A673 (cell line): ENCODE measurements at regions of chr4 and their contacts with region 1.

Region 1: DNA sequence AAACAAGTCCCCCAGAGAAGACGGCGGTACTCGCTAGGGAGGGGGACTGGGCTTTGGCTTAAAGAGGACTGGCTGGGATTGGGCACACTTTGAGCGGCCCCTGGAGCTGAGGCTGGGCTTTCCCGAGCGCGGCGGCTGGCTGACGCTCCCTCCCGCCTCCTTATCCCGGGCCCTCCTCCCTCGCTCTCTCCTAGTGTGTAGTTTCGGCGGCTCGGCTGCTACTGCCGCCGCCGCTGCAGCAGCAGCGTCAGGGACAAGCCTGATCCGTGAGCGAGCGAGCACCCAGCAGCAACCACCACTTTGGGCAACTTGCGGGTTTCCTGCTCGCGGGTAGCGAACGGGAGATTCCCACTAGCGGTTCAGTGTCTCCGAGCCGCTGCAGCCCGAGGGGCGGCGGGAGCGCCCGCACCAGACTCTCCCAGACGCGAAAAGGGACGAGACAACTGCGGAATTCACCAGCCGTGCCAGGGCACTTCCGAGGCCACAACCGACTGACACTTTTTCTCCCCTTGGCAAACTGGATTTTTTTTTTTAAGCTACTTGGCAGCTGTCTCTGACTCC is 629 bp upstream of the PCDH7 start:
- DNase-seq: peak; percentile 90
- H3K4me3 ChIP-seq: peak overlapping the region; percentile 93
- H3K27ac ChIP-seq: peak overlapping the region; percentile 96
- H3K4me1 ChIP-seq: peaks cover 18% of the 10 kb centered on the region
- H3K27me3 ChIP-seq: no peaks in the 10 kb centered on the region
- CTCF ChIP-seq: no peak

Region 2: DNA sequence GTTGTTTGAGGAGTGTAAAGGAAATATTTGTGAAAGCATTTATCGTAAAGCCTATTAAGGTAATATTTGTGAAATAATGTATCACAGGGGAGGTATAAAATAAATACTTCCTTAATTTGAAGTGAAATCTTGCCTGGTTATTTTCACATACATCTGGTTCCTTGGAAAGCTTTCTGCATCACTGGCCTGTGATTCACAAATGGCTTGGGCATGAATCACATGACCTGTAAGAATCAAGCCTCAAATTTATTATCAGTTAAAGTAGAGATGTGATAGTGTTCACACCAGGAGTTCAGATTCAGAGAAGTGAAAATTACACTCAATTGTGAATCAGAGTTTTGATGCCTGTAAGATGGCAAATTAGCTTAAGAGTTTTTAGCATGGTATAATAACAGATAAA is 1947.5 kb before region 1 on chr4:
- CTCF ChIA-PET with region 1: no interaction called
- POLR2A ChIA-PET with region 1: no interaction called
- intact Hi-C with region 1: no loop called
- DNase-seq: peak; percentile 54
- H3K4me3 ChIP-seq: no peak overlapping the region
- H3K27ac ChIP-seq: no peak overlapping the region
- H3K4me1 ChIP-seq: no peaks in the 10 kb centered on the region
- H3K27me3 ChIP-seq: no peaks in the 10 kb centered on the region
- CTCF ChIP-seq: no peak

Region 3: DNA sequence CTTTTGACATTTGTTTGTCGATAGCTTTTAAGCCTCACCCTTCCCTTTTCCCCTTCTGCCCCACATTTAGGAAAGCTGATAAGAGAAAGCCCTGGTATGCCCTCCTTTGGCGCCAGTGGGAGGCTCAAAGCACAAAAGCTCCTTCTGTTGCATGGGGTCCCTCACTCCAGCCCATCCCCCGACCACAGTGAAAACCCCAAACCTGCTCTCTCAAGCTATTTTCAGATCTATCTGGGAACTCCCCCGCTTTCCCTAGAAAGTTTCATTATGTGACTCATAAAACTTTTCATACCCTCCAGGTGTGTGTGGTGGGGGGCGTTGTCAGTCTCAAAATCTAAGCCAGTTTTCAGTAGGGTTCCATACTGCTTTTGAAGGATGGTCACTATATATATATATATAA is 258.3 kb before region 1 on chr4:
- CTCF ChIA-PET with region 1: no interaction called
- POLR2A ChIA-PET with region 1: no interaction called
- intact Hi-C with region 1: no loop called
- DNase-seq: no peak
- H3K4me3 ChIP-seq: no peak overlapping the region
- H3K27ac ChIP-seq: no peak overlapping the region
- H3K4me1 ChIP-seq: no peaks in the 10 kb centered on the region
- H3K27me3 ChIP-seq: no peaks in the 10 kb centered on the region
- CTCF ChIP-seq: no peak

Region 4: GRCh38 chr4:30642567-30642966 is 77.0 kb before region 1 on chr4:
- CTCF ChIA-PET with region 1: no interaction called
- POLR2A ChIA-PET with region 1: no interaction called
- intact Hi-C with region 1: no loop called
- DNase-seq: no peak
- H3K4me3 ChIP-seq: no peak overlapping the region
- H3K27ac ChIP-seq: no peak overlapping the region
- H3K4me1 ChIP-seq: no peaks in the 10 kb centered on the region
- H3K27me3 ChIP-seq: no peaks in the 10 kb centered on the region
- CTCF ChIP-seq: no peak

Region 5: GRCh38 chr4:30769093-30769492 is 49.6 kb after region 1 on chr4:
- CTCF ChIA-PET with region 1: no interaction called
- POLR2A ChIA-PET with region 1: interaction called, 4 read pairs
- intact Hi-C with region 1: loop called (anchors 5 kb)
- DNase-seq: peak; percentile 32
- H3K4me3 ChIP-seq: no peak overlapping the region
- H3K27ac ChIP-seq: peak overlapping the region; percentile 57
- H3K4me1 ChIP-seq: peaks cover 84% of the 10 kb centered on the region
- H3K27me3 ChIP-seq: no peaks in the 10 kb centered on the region
- CTCF ChIP-seq: no peak

Region 6: DNA sequence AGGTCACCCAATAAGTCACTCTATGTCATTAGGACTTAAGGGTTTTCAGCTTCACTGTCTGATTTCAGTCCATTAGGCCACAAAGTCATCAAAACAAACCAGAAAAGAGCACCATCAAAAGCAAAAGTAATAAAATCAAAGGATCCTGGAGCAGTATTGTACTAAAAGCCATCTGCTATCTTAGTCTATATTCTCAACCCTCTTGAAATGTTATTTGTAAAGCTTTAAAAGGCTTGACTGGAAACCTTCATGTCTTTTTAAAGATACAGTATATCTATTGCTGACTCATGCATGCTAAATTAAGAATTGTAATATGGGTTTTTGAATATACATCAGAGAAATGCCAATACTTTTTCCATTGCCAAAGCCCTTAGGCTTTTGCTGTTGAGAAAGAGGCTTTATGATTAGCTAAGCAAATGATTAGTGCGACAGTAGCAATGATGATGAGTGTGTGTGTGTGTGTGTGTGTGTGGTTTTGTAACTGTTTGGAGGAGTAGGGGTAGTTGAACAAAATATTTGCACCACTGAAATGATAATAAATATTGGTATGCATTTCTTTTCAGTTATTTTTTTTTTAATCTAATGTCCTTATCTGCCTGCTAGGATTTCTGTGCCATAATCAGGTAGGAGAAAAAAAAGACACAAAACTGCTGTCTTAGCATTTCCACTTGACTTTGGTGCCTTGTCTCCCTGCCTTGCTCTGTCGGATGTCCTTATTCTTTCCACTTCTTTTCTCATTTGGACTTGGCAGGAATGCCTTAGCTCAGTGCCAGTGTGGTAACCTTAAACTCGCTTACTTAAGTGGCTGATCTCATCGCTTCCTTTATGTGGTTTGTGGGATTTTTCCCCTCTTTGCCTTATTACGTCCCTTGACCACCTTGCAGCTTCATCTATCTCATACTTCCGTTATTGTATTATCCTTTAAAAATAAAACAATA is 120.3 kb after region 1 on chr4:
- CTCF ChIA-PET with region 1: no interaction called
- POLR2A ChIA-PET with region 1: no interaction called
- intact Hi-C with region 1: loop called (anchors 10 kb)
- DNase-seq: peak; percentile 83
- H3K4me3 ChIP-seq: no peak overlapping the region
- H3K27ac ChIP-seq: peak overlapping the region; percentile 44
- H3K4me1 ChIP-seq: peaks cover 77% of the 10 kb centered on the region
- H3K27me3 ChIP-seq: no peaks in the 10 kb centered on the region
- CTCF ChIP-seq: no peak

Region 7: GRCh38 chr4:30863021-30863420 is 143.5 kb after region 1 on chr4:
- CTCF ChIA-PET with region 1: no interaction called
- POLR2A ChIA-PET with region 1: no interaction called
- intact Hi-C with region 1: loop called (anchors 2 kb)
- DNase-seq: peak; percentile 74
- H3K4me3 ChIP-seq: peak overlapping the region; percentile 6
- H3K27ac ChIP-seq: peak overlapping the region; percentile 64
- H3K4me1 ChIP-seq: peaks cover 62% of the 10 kb centered on the region
- H3K27me3 ChIP-seq: no peaks in the 10 kb centered on the region
- CTCF ChIP-seq: 0 out of 2 replicates have a peak, but pooled peaks have one; percentile 10